ENCODE measurements at regions of chr1 and their contacts with region 1.

Region 1: DNA sequence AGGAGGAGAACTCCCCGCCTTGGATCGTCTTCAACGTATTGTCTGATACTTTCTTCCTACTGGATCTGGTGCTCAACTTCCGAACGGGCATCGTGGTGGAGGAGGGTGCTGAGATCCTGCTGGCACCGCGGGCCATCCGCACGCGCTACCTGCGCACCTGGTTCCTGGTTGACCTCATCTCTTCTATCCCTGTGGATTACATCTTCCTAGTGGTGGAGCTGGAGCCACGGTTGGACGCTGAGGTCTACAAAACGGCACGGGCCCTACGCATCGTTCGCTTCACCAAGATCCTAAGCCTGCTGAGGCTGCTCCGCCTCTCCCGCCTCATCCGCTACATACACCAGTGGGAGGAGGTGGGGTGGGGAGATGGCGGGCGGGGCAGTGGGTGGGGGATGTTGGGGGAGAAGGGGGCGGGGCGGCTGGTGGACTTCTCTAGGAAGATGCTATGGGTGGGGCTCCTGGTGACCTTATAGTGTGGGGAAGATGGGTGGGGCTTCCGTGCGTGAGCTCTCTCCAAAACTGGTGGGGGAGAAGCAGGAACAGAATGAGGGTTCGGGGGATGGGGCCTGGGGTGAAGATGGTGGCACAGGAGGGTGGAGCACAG is 5.3 kb downstream of the HCN3 start:
- DNase-seq: no peak
- ATAC-seq: no peak
- H3K4me3 ChIP-seq: no peak overlapping the region
- H3K27ac ChIP-seq: no peak overlapping the region
- H3K4me1 ChIP-seq: no peaks in the 10 kb centered on the region
- H3K27me3 ChIP-seq: no peaks in the 10 kb centered on the region
- CTCF ChIP-seq: no peak

Region 2: GRCh38 chr1:155323798-155324610 is 41.4 kb after region 1 on chr1:
- intact Hi-C with region 1: loop called in 1 of 3 experiments (anchors 5 kb)
- DNase-seq: peak; percentile 93 to 97 (median 95)
- ATAC-seq: peak; percentile 85 to 91 (median 86)
- H3K4me3 ChIP-seq: peak overlapping the region; percentile 79 to 91 (median 86)
- H3K27ac ChIP-seq: peak overlapping the region; percentile 81 to 97 (median 88)
- H3K4me1 ChIP-seq: peaks cover 0 to 7% (median 0%) of the 10 kb centered on the region in 3 donors
- H3K27me3 ChIP-seq: no peaks in the 10 kb centered on the region
- CTCF ChIP-seq: no peak

Measured in pancreas (tissue), 10 donors.